ENCODE measurements at regions of chr9 and their contacts with region 1.

Region 1: GRCh38 chr9:119859128-119859527 is 489.9 kb upstream of the BRINP1 start:
- DNase-seq: no peak

Region 2: DNA sequence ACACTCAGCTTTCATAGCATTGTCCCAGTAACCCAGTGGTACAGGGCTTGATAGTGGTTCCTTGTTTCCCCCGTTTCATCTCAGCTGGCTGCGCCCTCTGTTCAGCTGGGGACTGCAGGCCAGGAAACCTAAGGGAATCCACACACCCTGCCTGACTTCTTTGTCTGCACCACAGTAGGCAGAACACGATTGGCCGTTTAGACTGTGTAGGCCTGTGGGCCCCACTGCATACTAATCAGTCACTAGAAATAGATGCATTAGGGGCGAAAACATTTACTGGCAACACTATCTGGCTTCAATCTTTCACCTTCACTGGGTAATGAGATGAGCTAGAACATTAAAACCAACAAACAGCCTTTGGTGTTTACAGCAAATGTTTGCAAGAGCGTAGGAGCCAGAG is 22.8 kb after region 1 on chr9:
- intact Hi-C with region 1: loop called in 1 of 2 experiments (anchors 1 kb)
- DNase-seq: no peak

Region 3: GRCh38 chr9:121242219-121242958 is 1383.3 kb after region 1 on chr9:
- intact Hi-C with region 1: no loop called
- DNase-seq: no peak